ENCODE measurements at regions of chr5 and their contacts with region 1.

Region 1: GRCh38 chr5:59380350-59380951 is 513.1 kb downstream of the PDE4D start:
- DNase-seq: peak; percentile 83

Region 2: GRCh38 chr5:58983526-58984452 is 396.7 kb before region 1 on chr5:
- in situ Hi-C with region 1: no loop called
- DNase-seq: no peak

Region 3: DNA sequence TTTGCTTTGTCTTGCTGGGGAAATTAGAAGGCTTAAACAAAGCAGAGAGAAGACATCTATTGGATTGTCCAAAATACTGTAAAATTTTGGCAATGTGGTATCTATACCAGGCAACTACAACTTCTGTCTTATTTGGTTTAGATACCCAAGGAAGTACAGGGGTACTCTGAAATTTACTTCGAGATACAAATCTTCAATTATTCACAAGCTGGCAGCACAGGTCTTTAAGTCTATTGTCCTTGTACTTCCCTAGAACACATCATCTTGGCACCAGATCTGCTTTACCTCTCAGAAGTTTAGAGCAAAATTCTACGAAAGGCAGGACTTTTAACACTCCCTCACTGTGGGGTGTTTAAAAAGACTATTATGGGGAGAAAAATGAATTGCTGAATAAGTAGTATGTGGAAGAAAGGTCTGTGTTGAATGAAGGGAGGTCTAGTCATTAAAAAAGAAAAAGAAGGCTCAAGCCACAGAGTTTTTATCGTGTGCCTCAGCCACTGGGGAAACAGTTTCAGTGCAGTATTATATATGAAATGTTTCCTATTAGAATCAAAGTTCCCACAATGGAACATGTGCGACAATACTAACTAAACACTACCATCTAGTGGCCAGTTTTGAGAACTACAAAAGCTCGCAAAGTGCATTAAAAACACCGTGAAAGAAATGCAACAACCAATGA is 419.4 kb after region 1 on chr5:
- in situ Hi-C with region 1: loop called (anchors 25 kb)
- DNase-seq: peak; percentile 69

Measured in KBM-7 (cell line).